Activated CD8-positive, alpha-beta T cell treated with anti-CD3 and anti-CD28 coated beads, Interleukin-2, amount 10 ng/mL, durations not matched to agents 7 days and 5 days (primary cell): ENCODE measurements at regions of chr6 and their contacts with region 1.

Region 1: DNA sequence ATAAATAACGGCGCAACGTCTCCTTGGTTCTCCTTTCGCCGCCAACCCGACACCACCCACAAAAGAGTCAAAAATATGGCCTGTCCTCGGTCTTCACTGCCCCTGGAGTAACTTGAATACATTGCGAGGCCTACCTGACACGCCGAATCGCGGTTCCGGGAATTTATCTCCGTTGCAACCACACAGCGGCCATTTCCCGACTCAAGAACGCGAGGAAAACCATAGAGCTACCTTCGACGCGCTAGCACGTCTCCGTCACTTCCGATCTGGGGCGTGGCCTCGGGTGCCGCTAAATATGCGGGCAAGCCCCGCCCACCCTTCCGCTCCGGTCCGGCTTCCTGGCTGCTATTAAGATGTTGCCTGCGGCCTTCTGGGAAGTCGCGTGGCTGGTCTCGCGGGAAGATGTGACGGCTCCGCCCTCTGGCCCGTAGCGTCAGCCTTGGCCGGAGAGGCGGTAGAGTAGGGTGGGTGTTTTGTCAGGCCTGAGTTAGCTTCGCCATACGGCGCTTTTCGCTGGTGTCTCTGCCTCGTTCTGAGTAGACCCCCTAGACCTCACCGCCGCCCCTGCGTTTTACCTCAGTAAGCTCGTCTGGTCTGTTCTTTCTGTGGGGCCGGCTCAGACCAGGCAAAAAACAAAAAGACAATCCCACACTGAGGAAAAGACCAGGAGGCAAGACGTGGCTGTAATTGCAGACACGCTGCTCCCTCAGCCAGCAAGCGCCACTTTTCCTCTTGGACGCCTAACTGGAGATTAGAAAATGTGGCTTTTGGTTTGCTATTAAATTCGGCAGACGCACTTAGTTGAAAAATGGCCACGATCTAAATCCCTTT is at the start of gene BCLAF1:
- DNase-seq: peak; percentile 100
- ATAC-seq: peak; percentile 81
- H3K4me3 Mint-ChIP-seq: peak within 1 kb of the TSS; percentile 98
- H3K27ac Mint-ChIP-seq: peak within 1 kb of the TSS; percentile 100
- H3K4me1 Mint-ChIP-seq: peaks cover 50% of the 10 kb centered on the region
- H3K27me3 Mint-ChIP-seq: no peaks in the 10 kb centered on the region
- total RNA-seq, gene BCLAF1: 126 to 133 TPM

Region 2: GRCh38 chr6:135497412-135498269 is 792.2 kb before region 1 on chr6 and contains the start of gene AHI1:
- CTCF ChIA-PET with region 1: no interaction called
- POLR2A ChIA-PET with region 1: interaction called, 32 read pairs
- DNase-seq: peak; percentile 88
- ATAC-seq: peak; percentile 84
- H3K4me3 Mint-ChIP-seq: no peak within 1 kb of the TSS
- H3K27ac Mint-ChIP-seq: no peak within 1 kb of the TSS
- H3K4me1 Mint-ChIP-seq: peaks cover 12% of the 10 kb centered on the region
- H3K27me3 Mint-ChIP-seq: peaks cover 2% of the 10 kb centered on the region
- total RNA-seq, gene AHI1: 10.9 to 13.8 TPM

Region 3: GRCh38 chr6:136146130-136146529 is 143.7 kb before region 1 on chr6:
- CTCF ChIA-PET with region 1: no interaction called
- POLR2A ChIA-PET with region 1: no interaction called
- DNase-seq: no peak
- ATAC-seq: no peak
- H3K4me3 Mint-ChIP-seq: no peak overlapping the region
- H3K27ac Mint-ChIP-seq: no peak overlapping the region
- H3K4me1 Mint-ChIP-seq: no peaks in the 10 kb centered on the region
- H3K27me3 Mint-ChIP-seq: peaks cover 3% of the 10 kb centered on the region

Region 4: GRCh38 chr6:136249811-136250685 is 39.7 kb before region 1 on chr6 and contains the start of gene MTFR2:
- CTCF ChIA-PET with region 1: interaction called, 17 read pairs
- POLR2A ChIA-PET with region 1: interaction called, 140 read pairs
- DNase-seq: peak; percentile 97
- ATAC-seq: peak; percentile 92
- H3K4me3 Mint-ChIP-seq: peak within 1 kb of the TSS; percentile 92
- H3K27ac Mint-ChIP-seq: peak within 1 kb of the TSS; percentile 94
- H3K4me1 Mint-ChIP-seq: peaks cover 48% of the 10 kb centered on the region
- H3K27me3 Mint-ChIP-seq: no peaks in the 10 kb centered on the region
- total RNA-seq, gene MTFR2: 27.2 to 27.9 TPM

Region 5: DNA sequence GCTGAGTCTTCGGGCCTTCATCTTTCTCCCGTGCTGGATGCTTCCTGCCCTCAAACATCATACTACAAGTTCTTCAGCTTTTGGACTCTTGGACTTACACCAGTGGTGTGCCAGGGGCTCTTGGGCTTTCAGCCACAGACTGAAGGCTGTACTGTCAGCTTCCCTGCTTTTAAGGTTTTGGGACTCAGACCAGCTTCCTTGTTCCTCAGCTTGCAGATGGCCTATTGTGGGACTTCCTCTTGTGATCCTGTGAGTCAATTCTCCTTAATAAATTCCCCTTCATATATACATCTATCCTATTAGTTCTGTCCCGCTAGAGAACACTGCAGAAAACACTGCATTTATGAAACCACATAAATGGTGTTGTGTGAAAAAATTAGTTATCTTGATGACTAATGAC is 13.7 kb after region 1 on chr6:
- CTCF ChIA-PET with region 1: interaction called, 3 read pairs
- POLR2A ChIA-PET with region 1: interaction called, 12 read pairs
- DNase-seq: no peak
- ATAC-seq: no peak
- H3K4me3 Mint-ChIP-seq: no peak overlapping the region
- H3K27ac Mint-ChIP-seq: no peak overlapping the region
- H3K4me1 Mint-ChIP-seq: no peaks in the 10 kb centered on the region
- H3K27me3 Mint-ChIP-seq: peaks cover 4% of the 10 kb centered on the region

Region 6: DNA sequence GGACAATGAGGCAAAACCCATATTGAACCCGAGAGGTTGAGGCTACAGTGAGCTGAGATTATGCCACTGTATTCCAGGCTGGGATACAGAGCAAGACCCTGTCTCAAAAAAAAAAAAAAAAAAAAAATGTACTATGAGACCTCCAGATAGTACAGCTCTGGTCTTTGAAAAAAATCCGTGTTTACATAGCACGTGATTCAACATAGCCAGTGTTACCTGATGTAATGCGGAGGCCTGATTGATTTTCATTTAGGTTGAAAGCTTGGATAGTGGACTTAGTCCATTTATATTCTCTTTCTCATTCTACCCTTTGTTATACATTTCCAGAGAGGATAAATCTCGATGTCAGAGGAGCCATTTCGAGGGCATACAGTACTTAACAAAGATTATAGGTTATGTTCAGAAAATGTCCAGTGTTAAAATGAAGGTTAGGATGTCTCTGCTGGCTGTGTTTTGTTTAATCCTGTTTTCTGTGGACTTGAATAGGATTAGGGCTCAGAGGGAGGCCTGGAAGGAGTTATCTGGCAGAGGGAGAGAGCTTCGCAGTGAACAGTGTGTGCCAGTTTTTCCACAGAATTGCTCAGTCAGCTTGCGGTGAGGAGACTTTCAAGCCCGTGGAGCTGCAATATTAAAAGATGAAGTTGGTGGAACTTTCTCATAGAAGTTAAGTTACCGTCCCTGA is 33.8 kb after region 1 on chr6:
- CTCF ChIA-PET with region 1: interaction called, 17 read pairs
- POLR2A ChIA-PET with region 1: interaction called, 38 read pairs
- DNase-seq: no peak
- ATAC-seq: no peak
- H3K4me3 Mint-ChIP-seq: no peak overlapping the region
- H3K27ac Mint-ChIP-seq: no peak overlapping the region
- H3K4me1 Mint-ChIP-seq: no peaks in the 10 kb centered on the region
- H3K27me3 Mint-ChIP-seq: peaks cover 4% of the 10 kb centered on the region

Region 7: GRCh38 chr6:136669299-136669699 is 379.5 kb after region 1 on chr6:
- CTCF ChIA-PET with region 1: no interaction called
- POLR2A ChIA-PET with region 1: no interaction called
- DNase-seq: no peak
- ATAC-seq: no peak
- H3K4me3 Mint-ChIP-seq: no peak overlapping the region
- H3K27ac Mint-ChIP-seq: no peak overlapping the region
- H3K4me1 Mint-ChIP-seq: no peaks in the 10 kb centered on the region
- H3K27me3 Mint-ChIP-seq: no peaks in the 10 kb centered on the region